A673 (cell line): ENCODE measurements at regions of chr3 and their contacts with region 1.

Region 1: DNA sequence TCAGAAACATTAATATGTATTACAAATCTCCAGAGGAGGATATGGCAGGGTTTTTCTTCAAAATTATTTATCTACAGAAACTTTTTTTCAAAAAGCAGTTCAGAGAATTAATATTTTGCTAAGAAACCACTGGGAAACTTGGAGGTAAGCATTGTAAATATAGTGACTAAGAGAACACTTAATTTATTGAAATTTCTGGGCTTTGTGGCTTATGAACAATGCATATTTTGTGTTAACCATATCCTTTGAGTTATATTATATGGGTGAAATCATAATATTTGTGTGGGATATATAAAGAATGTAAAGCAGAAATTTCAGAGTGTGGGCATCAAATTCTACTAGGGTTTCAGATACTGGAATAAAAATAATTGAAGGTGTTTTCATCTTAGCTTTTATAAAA is 1059.2 kb downstream of the ZPLD1 start:
- DNase-seq: no peak
- H3K4me3 ChIP-seq: no peak overlapping the region
- H3K27ac ChIP-seq: peak overlapping the region; percentile 98
- H3K4me1 ChIP-seq: peaks cover 75% of the 10 kb centered on the region
- H3K27me3 ChIP-seq: no peaks in the 10 kb centered on the region
- CTCF ChIP-seq: no peak

Region 2: DNA sequence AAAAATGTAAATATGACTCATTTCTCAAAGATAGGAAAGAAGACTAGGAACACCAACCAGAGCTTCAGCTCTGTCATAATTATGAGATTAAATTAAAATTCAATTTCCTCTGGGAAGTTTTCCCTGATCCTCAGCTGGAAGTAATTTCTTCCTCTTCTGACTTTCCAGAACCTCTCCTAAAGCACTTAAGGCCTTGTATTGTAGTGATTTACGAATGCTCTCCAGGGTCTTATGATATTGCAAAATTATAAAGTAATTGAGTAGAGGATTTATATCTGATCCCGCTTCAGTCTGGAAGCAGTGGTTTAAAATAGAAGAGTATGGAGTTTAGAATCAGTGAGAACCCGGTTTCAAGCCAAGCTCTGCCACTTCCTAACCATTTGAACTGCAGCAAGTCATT is 779.4 kb before region 1 on chr3:
- CTCF ChIA-PET with region 1: no interaction called
- POLR2A ChIA-PET with region 1: interaction called, 10 read pairs
- intact Hi-C with region 1: no loop called
- DNase-seq: peak; percentile 72
- H3K4me3 ChIP-seq: no peak overlapping the region
- H3K27ac ChIP-seq: no peak overlapping the region
- H3K4me1 ChIP-seq: peaks cover 13% of the 10 kb centered on the region
- H3K27me3 ChIP-seq: no peaks in the 10 kb centered on the region
- CTCF ChIP-seq: no peak

Region 3: GRCh38 chr3:103052236-103052830 is 441.7 kb before region 1 on chr3:
- CTCF ChIA-PET with region 1: interaction called, 5 read pairs
- POLR2A ChIA-PET with region 1: no interaction called
- intact Hi-C with region 1: loop called (anchors 1 kb)
- DNase-seq: peak; percentile 84
- H3K4me3 ChIP-seq: no peak overlapping the region
- H3K27ac ChIP-seq: peak overlapping the region; percentile 55
- H3K4me1 ChIP-seq: peaks cover 60% of the 10 kb centered on the region
- H3K27me3 ChIP-seq: no peaks in the 10 kb centered on the region
- CTCF ChIP-seq: no peak

Region 4: DNA sequence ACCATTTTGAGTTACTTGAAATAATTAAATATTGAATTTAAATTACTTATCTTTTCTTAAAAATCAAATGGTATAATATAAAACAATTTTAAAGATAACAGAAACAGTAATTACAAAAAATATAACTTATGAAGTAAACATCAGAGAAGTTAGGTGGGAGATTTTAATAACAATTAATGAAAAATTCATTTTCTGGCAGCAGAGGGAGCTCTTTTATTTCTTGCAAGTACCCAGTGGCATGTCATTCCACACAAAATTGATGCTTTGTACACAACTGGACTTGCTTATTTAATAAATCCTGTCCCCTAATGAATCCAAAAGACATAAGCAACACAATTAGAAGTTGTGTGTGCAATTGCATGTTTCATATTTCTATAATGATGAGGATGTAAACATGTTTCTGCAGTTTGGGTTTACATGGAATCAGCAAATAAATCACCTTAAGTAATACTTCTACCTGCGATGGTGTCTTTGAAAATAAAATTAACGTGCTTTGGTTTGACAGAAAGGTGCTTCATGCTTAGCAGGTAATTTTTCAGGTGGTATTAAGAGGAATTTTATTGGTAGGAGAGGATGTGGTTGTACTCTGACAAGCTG is 197.9 kb before region 1 on chr3:
- CTCF ChIA-PET with region 1: no interaction called
- POLR2A ChIA-PET with region 1: no interaction called
- intact Hi-C with region 1: loop called (anchors 2 kb)
- DNase-seq: peak; percentile 79
- H3K4me3 ChIP-seq: no peak overlapping the region
- H3K27ac ChIP-seq: no peak overlapping the region
- H3K4me1 ChIP-seq: peaks cover 45% of the 10 kb centered on the region
- H3K27me3 ChIP-seq: no peaks in the 10 kb centered on the region
- CTCF ChIP-seq: peak; percentile 67

Region 5: DNA sequence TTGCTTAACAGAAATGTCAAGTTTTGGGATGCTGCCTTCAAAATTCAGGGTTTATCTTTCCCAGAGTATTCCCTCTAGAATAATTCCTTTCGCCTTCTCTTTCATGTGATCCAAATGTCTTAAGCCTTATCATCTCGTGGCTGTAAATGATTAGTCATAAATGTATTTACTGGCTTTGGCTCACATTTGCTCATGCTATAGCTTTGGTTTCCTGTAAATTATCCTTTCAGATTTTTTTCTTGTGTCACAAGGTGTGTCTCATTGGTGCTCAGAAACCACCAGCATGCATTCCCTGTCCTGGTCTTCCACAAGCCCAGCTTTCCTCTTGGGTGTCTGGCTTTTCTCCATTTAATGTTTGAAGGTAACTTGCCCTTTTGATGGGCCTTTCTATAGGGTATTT is 1180.0 kb after region 1 on chr3:
- CTCF ChIA-PET with region 1: no interaction called
- POLR2A ChIA-PET with region 1: interaction called, 11 read pairs
- intact Hi-C with region 1: no loop called
- DNase-seq: no peak
- H3K4me3 ChIP-seq: no peak overlapping the region
- H3K27ac ChIP-seq: no peak overlapping the region
- H3K4me1 ChIP-seq: no peaks in the 10 kb centered on the region
- H3K27me3 ChIP-seq: no peaks in the 10 kb centered on the region
- CTCF ChIP-seq: no peak